Posterior cingulate gyrus (tissue), 11 donors: ENCODE measurements at regions of chr7 and their contacts with region 1.

Region 1: DNA sequence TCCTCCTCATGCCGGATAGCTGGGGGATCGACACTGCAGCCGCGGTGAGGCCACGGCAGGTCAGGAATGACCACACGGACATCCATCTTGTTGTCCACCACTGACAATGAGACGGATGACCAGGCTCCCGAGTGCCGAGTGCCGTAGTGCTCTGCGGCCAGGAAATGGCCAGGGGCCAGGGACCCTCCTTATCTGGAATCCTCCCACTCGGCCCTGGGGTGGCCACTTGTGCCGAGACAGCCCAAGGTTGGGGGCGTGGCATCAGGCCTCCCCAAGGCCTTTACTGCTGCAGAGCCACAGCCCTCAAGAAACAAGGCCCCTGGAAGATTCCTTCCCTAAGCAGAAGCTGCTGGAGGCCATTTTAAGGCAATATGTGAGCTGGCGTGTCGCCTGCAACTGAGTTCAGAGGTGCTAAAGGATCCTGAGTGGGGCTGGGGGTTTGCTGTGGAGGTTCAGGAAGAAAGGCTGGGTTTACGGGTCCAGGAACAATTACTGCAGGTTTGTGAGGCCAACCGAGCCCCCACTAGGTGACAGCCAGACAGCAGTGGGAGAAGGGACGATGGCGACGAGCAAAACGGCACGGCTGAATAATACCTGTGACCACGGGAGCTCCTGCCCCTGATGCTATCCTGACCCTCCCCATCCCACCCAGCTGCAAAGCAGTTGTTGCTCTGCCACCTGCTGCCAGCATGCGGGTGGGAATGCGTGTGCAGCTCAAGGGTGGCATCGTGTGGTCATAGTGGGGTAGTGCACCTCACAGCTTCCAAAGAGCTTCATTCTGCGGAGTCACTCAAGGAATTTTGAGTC is 31.6 kb upstream of the LEP start:
- DNase-seq: peak; percentile 42 to 96 (median 72)

Region 2: GRCh38 chr7:128031901-128032604 is 177.4 kb before region 1 on chr7:
- intact Hi-C with region 1: loop called (anchors 2 kb)
- DNase-seq: peak in 5 of 10 donors; percentile 47 to 93 (median 63)

Region 3: DNA sequence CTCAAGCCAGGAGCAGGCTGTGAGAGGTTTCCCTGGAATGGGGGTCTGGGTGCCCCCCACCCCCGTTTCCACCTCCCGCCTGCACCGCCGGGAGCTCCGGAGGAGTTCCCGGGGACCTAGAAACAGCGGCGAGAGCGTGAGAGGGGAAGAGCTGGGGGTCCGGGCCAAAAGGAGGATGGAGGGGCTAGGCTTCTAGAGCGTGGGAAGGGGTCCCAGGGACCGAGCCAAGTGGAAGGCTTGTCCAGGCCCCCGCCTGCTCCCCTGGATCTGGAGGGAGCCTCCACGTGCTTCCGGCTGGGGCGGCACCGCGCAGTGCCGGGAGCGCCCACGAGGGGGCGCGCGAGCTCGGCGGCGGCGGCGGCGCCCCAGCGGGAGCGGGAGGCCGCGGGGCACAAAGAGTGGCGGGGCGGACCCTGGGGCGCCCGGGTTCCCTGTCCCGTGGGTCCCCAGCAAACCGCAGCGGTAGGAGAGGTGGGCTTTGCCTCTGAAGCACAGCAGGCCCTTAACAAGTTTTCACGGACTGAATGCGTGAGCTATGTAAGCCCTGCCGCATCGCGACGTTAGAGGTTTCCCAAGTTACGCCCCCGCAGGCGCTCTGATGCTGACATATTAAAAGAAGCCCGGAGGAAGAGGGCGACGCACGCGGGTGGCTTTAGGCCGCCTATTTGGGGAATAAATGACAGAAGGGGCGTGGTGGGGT is 73.8 kb before region 1 on chr7:
- intact Hi-C with region 1: loop called (anchors 1 kb)
- DNase-seq: peak in 8 of 10 donors; percentile 36 to 91 (median 50)

Region 4: DNA sequence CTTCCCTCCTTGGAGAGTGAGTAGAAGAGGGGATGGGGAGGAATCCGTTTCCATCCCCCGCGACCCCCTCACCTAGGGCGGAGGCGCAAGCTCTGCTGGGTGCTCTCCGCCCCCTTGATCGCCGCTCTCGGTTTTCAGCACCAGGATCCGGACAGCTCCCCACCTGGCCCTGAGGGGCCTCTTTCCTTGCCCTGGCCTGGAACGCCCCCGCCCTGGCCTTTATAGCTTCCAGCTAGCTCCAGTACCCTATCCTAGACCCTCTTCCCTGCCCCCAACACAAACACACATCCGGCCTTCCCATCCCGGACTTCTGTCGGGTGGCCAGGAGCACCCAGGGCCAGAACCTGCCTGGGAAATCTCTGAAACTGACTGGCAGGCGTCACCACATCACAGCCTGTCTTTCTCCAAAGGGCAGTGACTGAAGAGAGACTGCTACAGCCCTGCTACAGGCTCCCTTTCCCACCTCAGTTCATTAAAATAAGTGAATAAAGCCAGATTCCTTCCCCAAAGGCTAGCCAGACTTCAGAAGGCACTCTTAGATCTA is 40.7 kb before region 1 on chr7:
- intact Hi-C with region 1: no loop called
- DNase-seq: no peak

Region 5: GRCh38 chr7:128322040-128322643 is 112.7 kb after region 1 on chr7:
- intact Hi-C with region 1: loop called (anchors 10 kb)
- DNase-seq: no peak